ENCODE measurements at regions of chr20 and their contacts with region 1.

Region 1: DNA sequence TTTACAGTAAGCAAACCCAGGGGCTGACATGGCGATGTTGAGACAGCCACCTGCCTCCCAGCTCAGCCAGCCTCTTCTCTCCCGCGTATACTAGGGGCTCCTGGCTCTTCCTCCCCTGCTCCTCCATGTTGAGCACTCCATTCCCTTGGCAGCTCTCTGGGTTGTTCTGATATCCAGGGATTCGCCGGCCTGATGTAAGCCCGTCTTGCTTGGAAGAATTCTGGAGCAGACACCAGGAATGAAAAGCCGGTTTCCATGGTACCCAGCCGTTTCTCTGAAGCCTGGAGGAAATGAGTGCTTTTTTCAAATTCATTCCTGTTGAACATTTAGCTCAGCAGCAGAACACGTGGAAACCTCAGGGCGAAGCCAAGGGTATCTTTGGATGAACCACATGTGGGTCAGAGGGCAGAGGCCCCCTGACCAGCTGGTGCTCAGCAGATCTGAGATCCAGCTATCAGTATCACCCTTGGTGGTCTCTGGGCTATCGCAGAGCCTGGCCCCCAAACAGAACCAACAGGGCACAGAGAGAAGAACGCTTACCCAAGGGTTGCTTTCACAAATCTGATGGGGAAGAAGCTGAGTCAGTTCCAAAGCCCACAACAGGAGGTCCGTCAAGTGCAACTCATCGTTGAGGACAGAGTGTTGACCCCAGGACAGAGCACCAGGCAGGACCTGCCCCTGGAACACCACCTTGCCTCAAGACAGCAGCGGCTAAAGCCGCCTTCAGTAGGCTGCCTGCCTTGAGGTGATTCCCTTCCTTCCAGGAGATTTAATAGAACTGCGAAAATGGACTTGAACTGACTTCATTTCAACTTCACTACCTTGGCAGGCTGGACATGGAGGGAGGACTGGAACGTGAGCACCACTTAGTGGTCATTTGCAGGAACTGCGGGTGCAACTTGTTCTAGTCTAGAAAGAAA is 96.1 kb upstream of the RIN2 start:
- DNase-seq: peak; percentile 55 to 78 (median 73)
- ATAC-seq: peak; percentile 76 to 83
- H3K4me3 ChIP-seq: no peak overlapping the region
- H3K27ac ChIP-seq: no peak overlapping the region
- H3K4me1 ChIP-seq: no peaks in the 10 kb centered on the region
- H3K27me3 ChIP-seq: no peaks in the 10 kb centered on the region

Region 2: GRCh38 chr20:18904624-18905023 is 757.4 kb before region 1 on chr20:
- intact Hi-C with region 1: loop called in 1 of 4 experiments (anchors 10 kb)
- DNase-seq: no peak
- ATAC-seq: no peak
- H3K4me3 ChIP-seq: no peak overlapping the region
- H3K27ac ChIP-seq: no peak overlapping the region
- H3K4me1 ChIP-seq: no peaks in the 10 kb centered on the region
- H3K27me3 ChIP-seq: no peaks in the 10 kb centered on the region

Region 3: DNA sequence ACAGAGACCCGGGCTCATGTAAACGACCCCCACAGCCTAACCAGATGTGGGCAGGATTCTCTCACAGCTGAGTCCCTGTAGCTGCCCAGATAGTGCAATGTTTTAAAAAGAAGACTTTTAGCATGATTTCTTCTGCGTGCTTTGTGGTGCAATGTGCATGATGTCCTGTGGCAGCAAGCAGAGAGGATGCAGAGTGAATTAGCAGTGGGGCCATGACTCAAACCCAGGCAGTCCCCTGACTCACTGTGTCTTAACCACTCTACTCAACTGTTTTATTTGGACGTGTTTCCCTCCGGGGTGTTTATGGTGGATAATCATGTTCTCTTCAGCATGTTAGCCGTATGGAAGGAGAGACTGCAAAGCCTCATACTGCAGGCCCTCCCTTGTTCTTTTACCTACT is 201.6 kb before region 1 on chr20:
- intact Hi-C with region 1: no loop called
- DNase-seq: no peak
- ATAC-seq: no peak
- H3K4me3 ChIP-seq: no peak overlapping the region
- H3K27ac ChIP-seq: no peak overlapping the region
- H3K4me1 ChIP-seq: no peaks in the 10 kb centered on the region
- H3K27me3 ChIP-seq: no peaks in the 10 kb centered on the region

Region 4: GRCh38 chr20:19958219-19958618 is 296.2 kb after region 1 on chr20:
- intact Hi-C with region 1: no loop called
- DNase-seq: no peak
- ATAC-seq: no peak
- H3K4me3 ChIP-seq: no peak overlapping the region
- H3K27ac ChIP-seq: no peak overlapping the region
- H3K4me1 ChIP-seq: no peaks in the 10 kb centered on the region
- H3K27me3 ChIP-seq: no peaks in the 10 kb centered on the region

Measured in right cardiac atrium (tissue), 5 donors.